MCF 10A (cell line): ENCODE measurements at regions of chr19 and their contacts with region 1.

Region 1: DNA sequence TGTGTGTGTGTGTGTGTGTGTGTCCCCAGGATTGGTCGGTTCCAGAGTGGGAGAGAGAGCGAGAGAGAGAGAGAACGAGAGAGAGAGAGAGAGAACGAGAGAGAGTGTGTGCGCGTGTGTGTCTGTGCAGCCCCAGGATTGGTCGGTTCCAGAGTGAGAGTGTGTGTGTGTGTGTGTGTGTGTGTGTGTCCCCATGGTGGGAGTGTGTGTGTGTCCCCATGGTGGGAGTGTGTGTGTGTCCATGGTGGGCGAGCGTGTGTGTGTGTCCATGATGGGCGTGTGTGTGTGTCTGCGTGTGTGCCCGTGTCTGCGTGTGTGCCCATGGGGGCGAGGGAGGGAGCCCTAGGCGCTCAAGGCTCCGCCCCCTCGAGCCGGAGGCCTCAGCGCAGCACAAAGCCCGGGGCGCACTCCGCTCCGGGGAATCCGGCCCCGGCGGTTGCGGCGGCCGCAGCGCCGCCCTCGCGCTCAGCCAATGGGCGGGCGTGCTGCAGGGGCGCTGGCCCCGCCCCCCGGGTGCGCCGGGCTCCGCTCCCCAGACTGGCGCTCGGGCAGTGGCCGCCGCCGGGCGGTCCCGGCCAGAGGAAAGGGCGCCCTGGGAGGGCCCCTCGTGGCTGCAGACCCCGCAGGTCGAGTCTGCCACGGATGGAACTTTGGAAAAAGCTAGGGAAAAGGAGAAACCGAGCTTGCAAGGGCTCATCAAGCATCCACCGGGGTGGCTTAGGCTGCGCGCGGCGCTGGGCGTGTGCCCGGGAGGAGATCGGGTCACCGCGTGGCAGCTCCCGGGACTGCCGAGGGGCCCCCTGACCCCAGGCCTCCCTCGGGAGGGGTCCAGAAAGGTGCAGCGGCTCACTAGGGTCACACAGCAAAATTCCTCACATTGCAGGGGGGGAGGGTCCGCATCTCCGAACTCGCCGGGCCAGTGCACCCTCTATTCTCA is 96.2 kb downstream of the INSR start:
- DNase-seq: peak; percentile 89
- H3K4me3 Mint-ChIP-seq: peak overlapping the region; percentile 81
- H3K27ac Mint-ChIP-seq: peak overlapping the region; percentile 17
- H3K4me1 Mint-ChIP-seq: peaks cover 19% of the 10 kb centered on the region
- H3K27me3 Mint-ChIP-seq: no peaks in the 10 kb centered on the region
- CTCF ChIP-seq: no peak

Region 2: DNA sequence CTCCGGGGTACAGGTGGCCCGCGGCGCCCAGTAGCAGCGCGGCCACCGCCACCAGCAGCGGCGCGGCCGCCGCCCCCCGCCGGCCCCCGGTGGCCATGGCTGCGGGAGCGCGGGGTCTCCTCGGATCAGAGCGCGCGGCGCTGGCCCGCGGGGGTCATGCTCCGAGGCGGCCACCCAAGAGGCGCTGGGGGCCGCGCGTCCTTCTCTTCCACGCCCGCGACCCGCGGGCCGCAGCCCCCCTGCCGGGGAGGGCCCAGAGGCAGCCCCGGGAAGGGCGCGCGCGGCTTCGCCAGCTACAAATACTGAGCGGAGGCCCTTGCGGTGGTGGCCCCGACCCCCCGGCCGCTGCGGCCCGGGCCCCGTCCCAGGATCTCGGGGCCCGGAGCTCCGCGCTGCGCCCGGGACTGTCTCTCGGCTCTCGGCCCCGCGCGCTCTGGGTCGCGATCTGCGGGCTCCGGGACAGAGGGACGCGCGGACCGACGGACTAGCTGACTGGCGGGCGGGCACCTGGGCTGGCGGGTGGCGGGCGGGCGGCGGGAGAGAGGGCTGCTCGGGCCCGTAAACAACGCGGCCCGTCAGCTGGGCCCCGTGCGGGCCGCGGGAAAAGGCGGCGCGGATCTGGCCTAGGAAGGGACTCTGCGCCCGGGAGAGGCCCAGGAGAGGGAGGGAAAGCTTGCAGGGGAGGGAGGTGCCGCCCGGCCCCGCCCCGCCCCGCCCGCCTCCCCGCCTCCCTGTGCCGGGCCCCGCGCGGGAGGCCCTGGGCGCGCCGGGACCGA is 96.0 kb after region 1 on chr19 and contains the start of gene INSR:
- CTCF ChIA-PET with region 1: no interaction called
- POLR2A ChIA-PET with region 1: interaction called, 14 read pairs
- intact Hi-C with region 1: loop called (anchors 1 kb)
- DNase-seq: peak; percentile 91
- H3K4me3 Mint-ChIP-seq: peak within 1 kb of the TSS; percentile 79
- H3K27ac Mint-ChIP-seq: no peak within 1 kb of the TSS
- H3K4me1 Mint-ChIP-seq: peaks cover 6% of the 10 kb centered on the region
- H3K27me3 Mint-ChIP-seq: no peaks in the 10 kb centered on the region
- CTCF ChIP-seq: no peak
- total RNA-seq, gene INSR: 8.8 and 11.8 TPM in 2 replicates

Region 3: DNA sequence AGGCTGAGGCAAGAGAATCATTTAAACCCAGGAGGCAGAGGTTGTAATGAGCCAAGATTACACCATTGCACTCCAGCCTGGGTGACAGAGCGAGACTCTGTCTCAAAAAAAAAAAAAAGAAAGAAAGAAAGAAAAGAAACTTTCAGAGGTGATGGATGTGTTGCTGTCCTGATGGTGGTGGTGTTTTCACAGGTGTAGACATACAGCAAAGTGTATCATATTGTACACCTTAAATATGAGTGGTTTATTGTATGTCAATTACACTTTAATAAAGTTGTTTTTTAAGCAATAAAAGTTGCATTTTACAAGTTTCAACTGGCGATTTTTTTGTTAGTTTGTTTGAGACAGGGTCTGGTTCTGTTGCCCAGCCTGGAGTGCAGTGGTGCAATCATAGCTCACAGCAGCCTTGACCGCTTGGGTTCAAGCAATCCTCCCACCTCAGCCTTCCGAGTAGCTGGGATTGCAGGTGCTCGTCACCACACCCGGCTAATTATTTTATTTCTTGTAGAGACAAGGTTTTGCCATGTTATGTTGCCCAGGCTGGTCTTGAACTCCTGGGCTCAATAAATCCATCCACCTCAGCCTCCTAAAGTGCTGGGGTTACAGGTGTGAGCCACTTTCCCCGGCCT is 109.7 kb after region 1 on chr19:
- CTCF ChIA-PET with region 1: no interaction called
- POLR2A ChIA-PET with region 1: no interaction called
- intact Hi-C with region 1: no loop called
- DNase-seq: no peak
- H3K4me3 Mint-ChIP-seq: no peak overlapping the region
- H3K27ac Mint-ChIP-seq: no peak overlapping the region
- H3K4me1 Mint-ChIP-seq: peaks cover 5% of the 10 kb centered on the region
- H3K27me3 Mint-ChIP-seq: peaks cover 11% of the 10 kb centered on the region
- CTCF ChIP-seq: no peak